CD4-positive, alpha-beta memory T cell (primary cell): ENCODE measurements at regions of chr2 and their contacts with region 1.

Region 1: DNA sequence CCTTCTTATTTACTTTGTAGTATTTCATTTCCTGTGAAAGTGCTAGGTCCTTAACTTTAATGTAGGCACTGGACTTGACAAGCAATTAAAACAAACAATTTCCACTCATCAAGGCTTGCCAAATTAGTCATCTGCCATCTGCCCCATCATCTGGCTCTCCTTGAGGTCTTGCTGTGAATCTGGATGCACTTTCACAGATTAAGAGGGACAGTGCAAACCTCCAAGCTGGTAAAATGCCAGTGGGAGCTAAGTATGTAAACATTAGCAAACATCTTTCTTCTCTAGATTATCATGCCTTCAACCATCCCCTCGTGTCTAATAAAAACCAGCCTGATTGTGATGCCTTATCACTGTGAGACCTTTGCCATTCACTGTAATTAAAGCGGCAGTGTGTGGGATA is 402.9 kb downstream of the ERBB4 start:
- DNase-seq: no peak
- H3K4me3 ChIP-seq: no peak overlapping the region
- H3K4me3 Mint-ChIP-seq: no peak overlapping the region
- H3K27ac ChIP-seq: no peak overlapping the region
- H3K27ac Mint-ChIP-seq: no peak overlapping the region
- H3K4me1 ChIP-seq: no peaks in the 10 kb centered on the region
- H3K4me1 Mint-ChIP-seq: no peaks in the 10 kb centered on the region
- H3K27me3 ChIP-seq: no peaks in the 10 kb centered on the region
- H3K27me3 Mint-ChIP-seq: no peaks in the 10 kb centered on the region

Region 2: DNA sequence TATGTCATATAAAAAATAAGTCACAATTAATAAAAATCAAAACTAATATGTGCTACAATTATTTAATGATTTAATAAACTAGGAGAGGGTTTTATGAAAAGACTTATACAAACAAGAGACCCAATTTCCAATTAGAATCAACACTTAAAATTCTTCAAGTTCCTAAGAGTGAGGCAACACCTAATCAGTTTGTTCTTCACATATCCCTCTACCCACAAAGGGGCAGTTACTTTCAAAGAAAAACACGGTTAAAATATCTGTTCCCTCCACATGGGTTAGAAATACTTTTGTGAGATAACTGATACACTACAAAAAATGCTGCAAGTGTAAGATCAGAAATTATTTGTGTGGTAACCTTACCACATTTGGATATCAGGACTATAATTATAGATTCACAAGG is 45.9 kb after region 1 on chr2:
- CTCF ChIA-PET with region 1: no interaction called
- POLR2A ChIA-PET with region 1: no interaction called
- intact Hi-C with region 1: loop called (anchors 2 kb)
- DNase-seq: no peak
- H3K4me3 ChIP-seq: no peak overlapping the region
- H3K4me3 Mint-ChIP-seq: no peak overlapping the region
- H3K27ac ChIP-seq: no peak overlapping the region
- H3K27ac Mint-ChIP-seq: no peak overlapping the region
- H3K4me1 ChIP-seq: no peaks in the 10 kb centered on the region
- H3K4me1 Mint-ChIP-seq: no peaks in the 10 kb centered on the region
- H3K27me3 ChIP-seq: no peaks in the 10 kb centered on the region
- H3K27me3 Mint-ChIP-seq: no peaks in the 10 kb centered on the region

Region 3: GRCh38 chr2:213104092-213104902 is 968.6 kb after region 1 on chr2:
- CTCF ChIA-PET with region 1: no interaction called
- POLR2A ChIA-PET with region 1: no interaction called
- intact Hi-C with region 1: no loop called
- DNase-seq: no peak
- H3K4me3 ChIP-seq: no peak overlapping the region
- H3K4me3 Mint-ChIP-seq: peak overlapping the region in 7 of 8 donors; percentile 6 to 55 (median 9)
- H3K27ac ChIP-seq: no peak overlapping the region
- H3K27ac Mint-ChIP-seq: peak overlapping the region in 2 of 7 donors; percentile 7 to 15
- H3K4me1 ChIP-seq: peaks cover 7% of the 10 kb centered on the region
- H3K4me1 Mint-ChIP-seq: peaks cover 3 to 13% (median 5%) of the 10 kb centered on the region in 4 donors
- H3K27me3 ChIP-seq: no peaks in the 10 kb centered on the region
- H3K27me3 Mint-ChIP-seq: no peaks in the 10 kb centered on the region